ENCODE measurements at regions of chr4 and their contacts with region 1.

Region 1: GRCh38 chr4:102598086-102598761 is 97.1 kb downstream of the NFKB1 start:
- DNase-seq: peak in 2 of 9 experiments; percentile 53 to 71
- ATAC-seq: peak; percentile 84
- H3K4me3 ChIP-seq: peak overlapping the region in 1 of 2 experiments; percentile 7
- H3K4me3 Mint-ChIP-seq: peak overlapping the region; percentile 24
- H3K27ac ChIP-seq: peak overlapping the region; percentile 12 to 52
- H3K27ac Mint-ChIP-seq: peak overlapping the region; percentile 90
- H3K4me1 ChIP-seq: peaks cover 62% of the 10 kb centered on the region
- H3K4me1 Mint-ChIP-seq: peaks cover 74% of the 10 kb centered on the region
- H3K27me3 ChIP-seq: no peaks in the 10 kb centered on the region
- H3K27me3 Mint-ChIP-seq: no peaks in the 10 kb centered on the region
- CTCF ChIP-seq: no peak

Region 2: GRCh38 chr4:102586644-102587021 is 11.6 kb before region 1 on chr4:
- CTCF ChIA-PET with region 1: no interaction called
- POLR2A ChIA-PET with region 1: no interaction called
- intact Hi-C with region 1: loop called in 1 of 2 experiments (anchors 2 kb)
- DNase-seq: peak in 5 of 9 experiments; percentile 7 to 62 (median 47)
- ATAC-seq: peak; percentile 62
- H3K4me3 ChIP-seq: peak overlapping the region in 1 of 2 experiments; percentile 6
- H3K4me3 Mint-ChIP-seq: peak overlapping the region; percentile 30
- H3K27ac ChIP-seq: peak overlapping the region; percentile 2 to 52
- H3K27ac Mint-ChIP-seq: peak overlapping the region; percentile 83
- H3K4me1 ChIP-seq: peaks cover 68% of the 10 kb centered on the region
- H3K4me1 Mint-ChIP-seq: peaks cover 67% of the 10 kb centered on the region
- H3K27me3 ChIP-seq: no peaks in the 10 kb centered on the region
- H3K27me3 Mint-ChIP-seq: no peaks in the 10 kb centered on the region
- CTCF ChIP-seq: no peak

Measured in CD8-positive, alpha-beta T cell (primary cell).